AG04450 (cell line): ENCODE measurements at regions of chr18 and their contacts with region 1.

Region 1: GRCh38 chr18:4106407-4107033 is 348.6 kb downstream of the DLGAP1 start:
- DNase-seq: peak; percentile 13
- H3K4me3 ChIP-seq: no peak overlapping the region
- H3K27ac ChIP-seq: no peak overlapping the region
- H3K27me3 ChIP-seq: no peaks in the 10 kb centered on the region
- CTCF ChIP-seq: peak; percentile 81

Region 2: GRCh38 chr18:3554811-3555427 is 551.6 kb before region 1 on chr18:
- CTCF ChIA-PET with region 1: no interaction called
- POLR2A ChIA-PET with region 1: no interaction called
- DNase-seq: no peak
- H3K4me3 ChIP-seq: no peak overlapping the region
- H3K27ac ChIP-seq: no peak overlapping the region
- H3K27me3 ChIP-seq: peaks cover 3% of the 10 kb centered on the region
- CTCF ChIP-seq: no peak

Region 3: GRCh38 chr18:3821524-3821923 is 285.0 kb before region 1 on chr18:
- CTCF ChIA-PET with region 1: no interaction called
- POLR2A ChIA-PET with region 1: no interaction called
- DNase-seq: no peak
- H3K4me3 ChIP-seq: no peak overlapping the region
- H3K27ac ChIP-seq: no peak overlapping the region
- H3K27me3 ChIP-seq: no peaks in the 10 kb centered on the region
- CTCF ChIP-seq: no peak

Region 4: GRCh38 chr18:4096486-4096885 is 10.0 kb before region 1 on chr18:
- CTCF ChIA-PET with region 1: interaction called, 14 read pairs
- POLR2A ChIA-PET with region 1: no interaction called
- DNase-seq: no peak
- H3K4me3 ChIP-seq: no peak overlapping the region
- H3K27ac ChIP-seq: no peak overlapping the region
- H3K27me3 ChIP-seq: no peaks in the 10 kb centered on the region
- CTCF ChIP-seq: no peak

Region 5: DNA sequence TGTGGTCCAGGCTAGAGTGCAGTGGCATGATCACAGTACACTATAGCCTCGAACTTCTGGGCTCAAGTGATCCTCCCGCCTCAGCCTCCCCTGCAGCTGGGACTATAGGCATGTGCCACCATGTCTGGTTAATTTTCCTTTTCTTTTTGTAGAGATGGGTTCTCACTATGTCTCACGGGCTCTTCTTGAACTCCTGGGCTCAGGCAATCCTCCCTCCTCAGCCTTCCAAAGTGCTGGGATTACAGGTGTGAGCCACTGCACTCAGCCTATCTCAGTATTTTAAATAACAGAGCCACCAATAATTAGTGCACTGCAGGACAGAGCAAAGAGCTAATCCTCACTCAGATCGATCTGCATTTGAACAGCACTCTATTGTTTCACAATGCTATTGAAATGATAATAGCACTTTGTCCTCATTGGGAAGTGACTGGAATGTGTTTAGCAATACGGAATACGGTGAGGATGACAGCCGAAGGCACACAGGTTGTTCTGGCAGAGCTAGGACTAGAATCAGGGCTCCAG is 12.7 kb after region 1 on chr18:
- CTCF ChIA-PET with region 1: interaction called, 11 read pairs
- POLR2A ChIA-PET with region 1: no interaction called
- DNase-seq: no peak
- H3K4me3 ChIP-seq: no peak overlapping the region
- H3K27ac ChIP-seq: no peak overlapping the region
- H3K27me3 ChIP-seq: no peaks in the 10 kb centered on the region
- CTCF ChIP-seq: no peak

Region 6: DNA sequence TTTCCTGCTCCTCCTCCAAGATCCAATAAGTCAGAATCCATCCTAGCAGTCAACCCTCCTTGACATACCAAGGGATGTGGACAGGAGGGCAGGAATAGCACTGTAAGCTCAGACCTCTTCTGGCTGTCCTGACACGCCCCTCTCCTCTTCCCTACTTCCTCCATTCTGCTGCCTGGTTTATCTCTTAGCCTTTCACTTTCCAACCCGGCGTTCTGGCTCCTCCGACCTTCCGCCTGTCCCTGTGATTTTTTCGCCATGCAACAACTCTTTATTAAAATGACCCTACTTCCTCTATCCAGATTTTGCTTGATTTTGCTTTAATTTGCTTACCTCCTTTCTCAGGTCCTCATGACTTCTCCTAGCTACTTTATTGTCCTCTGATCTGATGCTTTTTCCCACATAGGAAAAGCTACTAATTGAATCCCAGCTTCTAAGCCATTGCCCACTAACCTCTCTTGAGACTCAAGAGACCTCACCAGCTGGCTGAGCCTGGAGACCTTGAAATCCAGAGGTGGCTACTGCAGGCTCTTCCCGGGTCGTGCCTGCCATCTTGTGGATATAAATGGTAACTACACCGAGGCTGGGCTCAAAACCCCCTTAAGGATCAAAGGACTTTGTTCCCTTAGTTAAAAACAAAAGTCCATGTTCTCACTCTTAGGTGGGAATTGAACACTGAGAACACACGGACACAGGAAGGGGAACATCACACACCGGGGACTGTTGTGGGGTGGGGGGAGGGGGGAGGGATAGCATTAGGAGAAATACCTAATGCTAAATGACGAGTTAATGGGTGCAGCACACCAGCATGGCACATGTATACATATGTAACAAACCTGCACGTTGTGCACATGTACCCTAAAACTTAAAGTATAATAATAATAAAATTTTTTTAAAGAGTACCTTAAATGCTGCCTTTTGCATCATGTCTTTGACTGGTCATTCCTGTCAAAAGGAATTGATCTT is 951.1 kb after region 1 on chr18:
- CTCF ChIA-PET with region 1: interaction called, 35 read pairs
- POLR2A ChIA-PET with region 1: no interaction called
- DNase-seq: no peak
- H3K4me3 ChIP-seq: no peak overlapping the region
- H3K27ac ChIP-seq: no peak overlapping the region
- H3K27me3 ChIP-seq: no peaks in the 10 kb centered on the region
- CTCF ChIP-seq: peak; percentile 67